SK-N-SH (cell line): ENCODE measurements at regions of chr5 and their contacts with region 1.

Region 1: GRCh38 chr5:150350524-150351344 is 6.8 kb upstream of the TCOF1 start:
- DNase-seq: peak; percentile 82
- H3K4me3 ChIP-seq: no peak overlapping the region
- H3K27ac ChIP-seq: no peak overlapping the region
- H3K4me1 ChIP-seq: peaks cover 0 to 12% of the 10 kb centered on the region in 2 experiments; a peak in 2 of 4 replicates
- H3K27me3 ChIP-seq: no peaks in the 10 kb centered on the region
- CTCF ChIP-seq: peak; percentile 85
- EP300 ChIP-seq: no peak
- RAD21 ChIP-seq: peak; percentile 89

Region 2: GRCh38 chr5:150066901-150067396 is 283.8 kb before region 1 on chr5:
- CTCF ChIA-PET with region 1: no interaction called
- POLR2A ChIA-PET with region 1: no interaction called
- DNase-seq: no peak
- H3K4me3 ChIP-seq: no peak overlapping the region
- H3K27ac ChIP-seq: peak overlapping the region in 1 of 2 experiments; percentile 53; a peak in 2 of 4 replicates
- H3K4me1 ChIP-seq: peaks cover 14 to 48% of the 10 kb centered on the region in 2 experiments; a peak in 3 of 4 replicates
- H3K27me3 ChIP-seq: no peaks in the 10 kb centered on the region
- CTCF ChIP-seq: no peak
- EP300 ChIP-seq: no peak
- RAD21 ChIP-seq: no peak

Region 3: DNA sequence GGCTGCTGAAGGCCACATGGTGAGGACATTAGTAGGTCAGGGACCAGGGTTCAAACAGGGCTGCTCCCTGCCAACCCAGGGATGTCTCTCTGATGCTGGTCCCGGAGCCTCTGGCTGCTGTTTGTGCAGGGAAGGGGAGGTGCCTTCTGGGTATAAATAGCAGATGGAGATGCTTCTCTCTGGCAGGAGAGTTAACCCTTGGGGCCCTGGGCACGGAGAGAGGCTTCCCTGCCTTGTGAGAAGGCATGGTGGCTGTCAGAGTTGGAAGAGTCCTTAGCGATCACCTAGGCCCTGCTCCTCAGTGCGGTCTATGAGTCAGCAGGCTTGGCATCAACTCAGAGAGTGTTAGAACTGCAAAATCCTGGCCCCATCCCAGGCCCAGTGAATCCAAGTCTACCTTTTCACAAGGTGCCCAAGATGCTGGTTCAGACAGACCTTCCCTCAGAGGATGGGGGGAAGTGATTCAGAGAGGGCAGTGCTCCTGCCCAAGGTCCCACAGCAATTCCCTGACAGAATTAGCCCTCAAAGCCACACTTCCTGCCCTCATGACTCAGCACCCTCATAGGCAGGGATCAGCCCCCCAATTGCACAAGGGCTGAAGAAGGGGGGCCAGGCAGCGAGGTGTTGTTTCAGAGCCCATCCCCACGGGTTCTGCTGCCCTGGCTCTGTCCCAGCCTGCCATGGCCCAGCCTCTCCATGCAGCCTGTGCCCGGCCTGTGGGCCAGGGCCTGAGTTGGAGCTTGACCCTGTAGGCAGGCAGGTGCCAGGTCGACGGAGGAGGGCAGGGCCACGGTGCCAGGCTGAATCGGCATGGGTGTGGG is 86.7 kb before region 1 on chr5:
- CTCF ChIA-PET with region 1: interaction called, 109 read pairs
- POLR2A ChIA-PET with region 1: no interaction called
- DNase-seq: peak; percentile 82
- H3K4me3 ChIP-seq: peak overlapping the region; percentile 1 to 49; a peak in 3 of 4 replicates
- H3K27ac ChIP-seq: peak overlapping the region in 1 of 2 experiments; percentile 67; a peak in 2 of 4 replicates
- H3K4me1 ChIP-seq: peaks cover 19 to 31% of the 10 kb centered on the region in 2 experiments; a peak in 3 of 4 replicates
- H3K27me3 ChIP-seq: no peaks in the 10 kb centered on the region
- CTCF ChIP-seq: no peak
- EP300 ChIP-seq: peak in 1 of 2 experiments; percentile 75; a peak in 1 of 4 replicates
- RAD21 ChIP-seq: no peak; the same call in 1 of the 2 replicates

Region 4: GRCh38 chr5:150293091-150293941 is 57.4 kb before region 1 on chr5:
- CTCF ChIA-PET with region 1: interaction called, 11 read pairs
- POLR2A ChIA-PET with region 1: no interaction called
- DNase-seq: no peak
- H3K4me3 ChIP-seq: no peak overlapping the region
- H3K27ac ChIP-seq: no peak overlapping the region
- H3K4me1 ChIP-seq: peaks cover 14% of the 10 kb centered on the region in 2 experiments; a peak in 3 of 4 replicates
- H3K27me3 ChIP-seq: no peaks in the 10 kb centered on the region
- CTCF ChIP-seq: no peak
- EP300 ChIP-seq: no peak
- RAD21 ChIP-seq: no peak

Region 5: GRCh38 chr5:150339165-150339564 is 11.6 kb before region 1 on chr5:
- CTCF ChIA-PET with region 1: interaction called, 24 read pairs
- POLR2A ChIA-PET with region 1: no interaction called
- DNase-seq: no peak
- H3K4me3 ChIP-seq: no peak overlapping the region
- H3K27ac ChIP-seq: no peak overlapping the region
- H3K4me1 ChIP-seq: no peaks in the 10 kb centered on the region
- H3K27me3 ChIP-seq: no peaks in the 10 kb centered on the region
- CTCF ChIP-seq: no peak
- EP300 ChIP-seq: no peak
- RAD21 ChIP-seq: no peak